ENCODE measurements at regions of chr9 and their contacts with region 1.

Region 1: DNA sequence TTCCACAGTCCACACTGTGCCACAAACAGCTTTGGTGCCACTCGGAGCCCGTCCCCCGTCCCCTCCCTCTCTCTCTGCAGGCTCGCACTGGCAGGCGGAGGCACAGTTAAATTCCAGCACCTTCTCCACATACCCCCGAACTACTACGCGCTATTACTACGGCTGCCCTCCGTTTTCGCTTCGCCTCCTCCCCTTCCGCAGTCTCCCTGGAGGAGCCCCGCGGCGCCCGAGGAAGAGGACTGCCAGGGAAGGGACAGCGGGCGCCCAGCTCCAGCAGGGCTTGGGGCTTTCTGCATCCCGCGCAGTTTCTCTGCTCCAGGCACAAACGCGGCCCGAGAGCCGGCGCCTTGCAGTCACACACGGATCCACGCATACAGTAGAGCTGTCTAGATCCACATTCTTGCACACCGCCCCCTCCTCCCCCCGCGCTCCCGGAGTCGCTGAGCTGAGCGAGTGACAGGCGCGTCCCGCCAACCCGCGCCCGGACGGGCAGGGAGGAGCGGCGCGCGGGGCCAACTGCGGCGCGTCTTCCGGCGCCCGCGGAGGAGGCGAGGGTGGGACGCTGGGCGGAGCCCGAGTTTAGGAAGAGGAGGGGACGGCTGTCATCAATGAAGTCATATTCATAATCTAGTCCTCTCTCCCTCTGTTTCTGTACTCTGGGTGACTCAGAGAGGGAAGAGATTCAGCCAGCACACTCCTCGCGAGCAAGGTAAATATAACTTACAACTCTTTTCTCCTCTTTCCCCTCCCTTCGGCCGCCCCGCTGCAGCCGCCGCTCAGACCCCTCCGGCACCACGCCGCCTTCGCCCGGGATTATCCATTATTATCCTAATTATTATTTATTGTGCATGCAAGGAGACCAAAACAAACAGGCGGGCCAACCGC is at the start of gene SMARCA2:
- DNase-seq: peak; percentile 98
- ATAC-seq: peak; percentile 87
- H3K4me3 Mint-ChIP-seq: peak within 1 kb of the TSS; percentile 97
- H3K27ac Mint-ChIP-seq: peak within 1 kb of the TSS; percentile 99
- H3K4me1 Mint-ChIP-seq: peaks cover 37% of the 10 kb centered on the region
- H3K27me3 Mint-ChIP-seq: peaks cover 17% of the 10 kb centered on the region
- total RNA-seq, gene SMARCA2: 168 to 188 TPM

Region 2: DNA sequence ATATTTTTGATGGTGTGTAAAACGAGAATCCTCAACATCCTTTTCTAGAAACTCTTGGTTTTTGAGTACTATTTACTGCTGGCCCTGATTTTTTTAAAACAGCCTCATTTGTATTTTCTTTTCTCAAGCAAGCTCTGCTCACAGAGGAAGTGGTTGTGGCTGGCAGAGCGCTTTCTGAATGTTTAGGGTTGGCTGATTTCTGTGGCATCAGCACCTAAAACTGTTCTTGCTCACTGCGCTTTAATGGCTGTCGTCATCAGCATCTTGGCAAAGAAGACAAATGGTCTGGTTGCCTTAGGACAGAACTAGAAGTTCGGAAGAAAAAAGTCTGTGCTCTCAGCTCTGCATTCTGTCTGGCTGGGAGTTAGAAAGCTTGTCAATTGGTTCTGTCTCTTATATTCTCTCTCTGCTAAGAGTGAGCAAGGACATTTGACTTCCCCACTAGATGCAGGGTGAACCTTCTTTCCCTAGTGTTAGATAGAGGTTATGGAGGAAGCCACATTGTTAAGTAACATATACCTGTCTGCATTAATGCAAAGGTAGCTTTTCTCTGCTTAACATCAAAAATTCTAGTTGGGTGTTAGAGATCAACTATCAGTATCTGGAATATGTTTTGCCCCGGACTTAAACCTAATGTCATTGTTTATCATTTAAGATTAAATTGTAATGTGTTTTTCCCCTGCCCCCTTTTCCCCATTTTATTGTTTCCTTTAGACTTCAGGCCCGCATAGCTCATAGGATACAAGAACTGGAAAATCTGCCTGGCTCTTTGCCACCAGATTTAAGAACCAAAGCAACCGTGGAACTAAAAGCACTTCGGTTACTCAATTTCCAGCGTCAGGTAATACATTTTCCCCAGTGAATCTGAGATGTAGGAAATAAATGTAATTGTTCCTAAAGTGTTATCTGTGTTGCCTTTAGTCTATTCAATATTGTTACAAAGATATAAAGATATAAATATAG is 39.2 kb after region 1 on chr9:
- CTCF ChIA-PET with region 1: interaction called, 13 read pairs
- DNase-seq: peak; percentile 92
- ATAC-seq: peak; percentile 96
- H3K4me3 Mint-ChIP-seq: peak overlapping the region; percentile 41
- H3K27ac Mint-ChIP-seq: peak overlapping the region; percentile 83
- H3K4me1 Mint-ChIP-seq: peaks cover 35% of the 10 kb centered on the region
- H3K27me3 Mint-ChIP-seq: no peaks in the 10 kb centered on the region

Measured in activated CD8-positive, alpha-beta memory T cell treated with anti-CD3 and anti-CD28 coated beads, Interleukin-2, amount 10 ng/mL, durations not matched to agents 7 days and 5 days (primary cell).